ENCODE measurements at regions of chr5 and their contacts with region 1.

Region 1: GRCh38 chr5:126651013-126651577 is 50.3 kb downstream of the PHAX start:
- DNase-seq: no peak
- H3K4me3 ChIP-seq: no peak overlapping the region
- H3K27ac ChIP-seq: no peak overlapping the region
- H3K4me1 ChIP-seq: no peaks in the 10 kb centered on the region
- CTCF ChIP-seq: no peak

Region 2: GRCh38 chr5:126339215-126339805 is 311.8 kb before region 1 on chr5:
- CTCF ChIA-PET with region 1: no interaction called
- POLR2A ChIA-PET with region 1: no interaction called
- intact Hi-C with region 1: loop called (anchors 5 kb)
- DNase-seq: peak; percentile 74
- H3K4me3 ChIP-seq: no peak overlapping the region
- H3K27ac ChIP-seq: no peak overlapping the region
- H3K4me1 ChIP-seq: no peaks in the 10 kb centered on the region
- CTCF ChIP-seq: peak; percentile 98

Region 3: GRCh38 chr5:126354012-126354857 is 296.9 kb before region 1 on chr5:
- CTCF ChIA-PET with region 1: no interaction called
- POLR2A ChIA-PET with region 1: no interaction called
- intact Hi-C with region 1: loop called (anchors 5 kb)
- DNase-seq: peak; percentile 46
- H3K4me3 ChIP-seq: no peak overlapping the region
- H3K27ac ChIP-seq: no peak overlapping the region
- H3K4me1 ChIP-seq: no peaks in the 10 kb centered on the region
- CTCF ChIP-seq: peak; percentile 76

Measured in OCI-LY7 (cell line).